PC-3 (cell line): ENCODE measurements at regions of chr1 and their contacts with region 1.

Region 1: DNA sequence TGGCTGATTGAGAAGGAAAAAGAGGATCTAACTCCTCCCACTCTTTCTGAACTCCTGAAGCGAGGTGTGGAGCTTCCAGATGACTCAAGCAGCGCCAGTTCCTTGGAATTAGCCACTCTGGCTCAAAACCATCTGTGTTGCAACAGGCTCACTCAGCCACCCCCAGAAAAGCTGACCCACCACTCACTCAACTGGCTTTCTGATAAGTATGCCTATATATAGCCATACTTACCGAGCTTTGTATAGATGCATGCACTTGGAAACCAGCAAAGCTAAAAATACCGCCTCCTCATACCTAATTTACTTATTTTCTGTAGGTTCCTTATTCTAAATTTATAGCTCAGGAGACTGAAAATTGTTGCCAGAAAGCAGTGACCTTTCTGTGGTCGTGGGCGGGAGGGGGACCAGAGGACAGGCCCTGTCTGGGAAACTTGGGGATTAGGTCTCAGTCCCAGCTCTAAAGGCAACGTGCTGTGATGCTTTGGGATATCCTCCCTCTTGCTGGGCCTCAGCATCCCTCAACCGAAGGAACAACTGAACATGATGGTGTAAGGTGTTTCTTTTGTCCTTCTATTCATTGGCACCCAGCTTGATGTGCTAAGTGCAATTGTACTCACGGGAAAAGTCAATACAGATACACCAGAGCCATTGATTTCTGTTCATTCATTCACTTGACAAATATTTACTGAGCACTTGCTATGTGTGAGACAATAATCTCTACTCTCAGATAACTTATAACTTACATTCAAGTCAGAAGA is 65.7 kb downstream of the NENF start:
- DNase-seq: peak; percentile 83
- ATAC-seq: peak; percentile 59
- H3K4me3 ChIP-seq: no peak overlapping the region
- H3K27ac ChIP-seq: 0 out of 2 replicates have a peak overlapping the region, but pooled peaks have one; percentile 3
- H3K4me1 ChIP-seq: peaks cover 12% of the 10 kb centered on the region; the same call in 1 of the 2 replicates
- H3K27me3 ChIP-seq: no peaks in the 10 kb centered on the region
- CTCF ChIP-seq: no peak

Region 2: GRCh38 chr1:212514056-212514614 is 15.7 kb after region 1 on chr1:
- CTCF ChIA-PET with region 1: no interaction called
- POLR2A ChIA-PET with region 1: interaction called, 16 read pairs
- intact Hi-C with region 1: no loop called
- DNase-seq: peak; percentile 95
- ATAC-seq: peak; percentile 49
- H3K4me3 ChIP-seq: no peak overlapping the region
- H3K27ac ChIP-seq: peak overlapping the region; percentile 35
- H3K4me1 ChIP-seq: peaks cover 19% of the 10 kb centered on the region
- H3K27me3 ChIP-seq: no peaks in the 10 kb centered on the region
- CTCF ChIP-seq: no peak; the same call in 1 of the 2 replicates

Region 3: GRCh38 chr1:213389061-213389581 is 890.7 kb after region 1 on chr1:
- CTCF ChIA-PET with region 1: no interaction called
- POLR2A ChIA-PET with region 1: no interaction called
- intact Hi-C with region 1: no loop called
- DNase-seq: no peak
- ATAC-seq: no peak
- H3K4me3 ChIP-seq: no peak overlapping the region
- H3K27ac ChIP-seq: no peak overlapping the region
- H3K4me1 ChIP-seq: no peaks in the 10 kb centered on the region
- H3K27me3 ChIP-seq: peaks cover 89% of the 10 kb centered on the region
- CTCF ChIP-seq: no peak